ENCODE measurements at regions of chr1 and their contacts with region 1.

Region 1: GRCh38 chr1:101025657-101026504 is at the start of gene DPH5:
- DNase-seq: peak; percentile 96
- ATAC-seq: peak; percentile 98
- total RNA-seq, gene DPH5: 35.4 TPM

Region 2: DNA sequence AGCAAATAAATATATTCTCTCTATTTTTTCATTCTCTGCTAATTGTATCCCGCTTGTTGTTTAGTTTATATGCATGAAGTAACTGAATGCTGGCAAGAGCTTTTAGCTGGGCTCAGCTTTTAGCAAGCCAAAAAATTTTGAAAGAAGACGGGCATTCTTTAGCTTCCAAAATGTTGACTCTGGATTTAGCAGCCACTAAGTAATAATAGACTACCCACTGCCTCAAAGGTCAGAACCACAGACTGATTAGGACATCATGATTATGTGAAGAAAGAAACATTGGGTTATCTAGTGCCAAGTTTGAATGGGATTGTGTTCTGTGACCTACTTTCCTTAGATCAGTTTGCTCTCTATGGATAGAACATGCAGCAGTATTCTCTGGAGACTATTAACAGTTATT is 80.0 kb after region 1 on chr1:
- intact Hi-C with region 1: loop called (anchors 5 kb)
- DNase-seq: no peak
- ATAC-seq: peak; percentile 72